ENCODE measurements at regions of chr11 and their contacts with region 1.

Region 1: DNA sequence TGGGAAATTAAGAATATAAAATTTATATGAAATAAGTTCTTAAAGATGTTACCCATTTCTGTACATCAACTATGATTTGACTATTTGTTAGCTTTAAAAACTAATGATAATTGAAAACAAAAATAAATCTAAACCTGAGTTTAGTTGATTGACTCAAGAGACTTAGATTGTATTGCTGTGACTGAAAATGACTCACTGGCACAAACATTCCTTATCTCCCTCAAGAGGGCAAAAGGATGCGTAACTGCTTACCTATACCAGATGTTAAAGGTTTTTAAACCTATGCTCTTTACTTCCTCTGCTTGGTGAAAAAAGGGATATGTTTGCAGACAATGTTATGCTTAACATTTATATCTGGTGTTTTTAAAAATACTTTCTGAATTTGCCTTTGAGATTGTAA is 30.3 kb downstream of the ATM start:
- DNase-seq: no peak
- ATAC-seq: no peak
- H3K4me3 ChIP-seq: no peak overlapping the region
- H3K4me3 Mint-ChIP-seq: no peak overlapping the region
- H3K27ac ChIP-seq: no peak overlapping the region
- H3K27ac Mint-ChIP-seq: no peak overlapping the region
- H3K4me1 ChIP-seq: no peaks in the 10 kb centered on the region
- H3K4me1 Mint-ChIP-seq: no peaks in the 10 kb centered on the region
- H3K27me3 ChIP-seq: no peaks in the 10 kb centered on the region
- H3K27me3 Mint-ChIP-seq: no peaks in the 10 kb centered on the region
- CTCF ChIP-seq: no peak

Region 2: DNA sequence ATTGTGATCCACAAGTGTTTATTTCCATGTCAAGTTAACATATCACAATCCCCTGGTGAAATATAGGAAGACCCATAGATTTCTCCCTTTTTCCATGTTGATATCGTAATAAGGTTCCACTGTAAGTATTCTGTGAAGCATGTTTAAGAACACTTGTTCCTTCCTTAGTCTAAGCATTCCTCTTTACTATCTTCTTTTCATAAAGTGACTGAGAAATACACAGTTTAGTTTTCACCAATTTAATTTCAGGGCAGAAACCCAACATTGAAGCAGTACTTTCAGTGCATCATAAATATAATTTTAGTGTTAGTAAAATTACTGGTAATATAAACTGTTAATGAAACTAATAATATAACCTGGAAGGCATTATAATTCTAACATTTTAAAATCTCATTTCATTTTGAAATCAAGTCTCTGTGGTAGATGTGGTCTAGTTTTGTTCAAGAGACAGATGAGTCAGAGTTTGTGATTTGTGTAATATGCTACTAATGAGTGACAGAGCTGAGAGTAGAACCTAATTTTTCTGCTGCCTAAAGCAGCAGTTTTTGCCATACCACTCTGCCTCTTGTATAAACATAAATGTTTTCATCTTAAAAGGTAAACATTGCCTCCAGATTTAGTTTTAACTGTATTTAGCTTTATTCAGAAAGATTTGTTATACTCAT is 49.1 kb after region 1 on chr11:
- CTCF ChIA-PET with region 1: no interaction called
- POLR2A ChIA-PET with region 1: no interaction called
- intact Hi-C with region 1: loop called (anchors 10 kb)
- DNase-seq: no peak
- ATAC-seq: no peak
- H3K4me3 ChIP-seq: no peak overlapping the region
- H3K4me3 Mint-ChIP-seq: no peak overlapping the region
- H3K27ac ChIP-seq: no peak overlapping the region
- H3K27ac Mint-ChIP-seq: no peak overlapping the region
- H3K4me1 ChIP-seq: no peaks in the 10 kb centered on the region
- H3K4me1 Mint-ChIP-seq: no peaks in the 10 kb centered on the region
- H3K27me3 ChIP-seq: no peaks in the 10 kb centered on the region
- H3K27me3 Mint-ChIP-seq: no peaks in the 10 kb centered on the region
- CTCF ChIP-seq: no peak

Measured in B cell (primary cell).